ENCODE measurements at regions of chr1 and their contacts with region 1.

Region 1: GRCh38 chr1:248807067-248807737 is 18.5 kb downstream of the SH3BP5L start:
- DNase-seq: peak in 4 of 5 donors; percentile 35 to 48 (median 42)
- H3K4me3 ChIP-seq: no peak overlapping the region
- H3K4me3 Mint-ChIP-seq: no peak overlapping the region
- H3K27ac ChIP-seq: no peak overlapping the region
- H3K27ac Mint-ChIP-seq: peak overlapping the region in 2 of 7 donors; percentile 4 to 73
- H3K4me1 ChIP-seq: no peaks in the 10 kb centered on the region
- H3K4me1 Mint-ChIP-seq: peaks cover 0 to 6% (median 3%) of the 10 kb centered on the region in 4 donors
- H3K27me3 ChIP-seq: no peaks in the 10 kb centered on the region
- H3K27me3 Mint-ChIP-seq: peaks cover 7 to 8% of the 10 kb centered on the region in 2 donors

Region 2: GRCh38 chr1:247681288-247681897 is 1125.8 kb before region 1 on chr1:
- CTCF ChIA-PET with region 1: no interaction called
- POLR2A ChIA-PET with region 1: no interaction called
- intact Hi-C with region 1: loop called (anchors 5 kb)
- DNase-seq: peak in 3 of 5 donors; percentile 5 to 8 (median 5)
- H3K4me3 ChIP-seq: no peak overlapping the region
- H3K4me3 Mint-ChIP-seq: no peak overlapping the region
- H3K27ac ChIP-seq: no peak overlapping the region
- H3K27ac Mint-ChIP-seq: no peak overlapping the region
- H3K4me1 ChIP-seq: no peaks in the 10 kb centered on the region
- H3K4me1 Mint-ChIP-seq: no peaks in the 10 kb centered on the region
- H3K27me3 ChIP-seq: no peaks in the 10 kb centered on the region
- H3K27me3 Mint-ChIP-seq: peaks cover 2% of the 10 kb centered on the region in 2 donors

Region 3: DNA sequence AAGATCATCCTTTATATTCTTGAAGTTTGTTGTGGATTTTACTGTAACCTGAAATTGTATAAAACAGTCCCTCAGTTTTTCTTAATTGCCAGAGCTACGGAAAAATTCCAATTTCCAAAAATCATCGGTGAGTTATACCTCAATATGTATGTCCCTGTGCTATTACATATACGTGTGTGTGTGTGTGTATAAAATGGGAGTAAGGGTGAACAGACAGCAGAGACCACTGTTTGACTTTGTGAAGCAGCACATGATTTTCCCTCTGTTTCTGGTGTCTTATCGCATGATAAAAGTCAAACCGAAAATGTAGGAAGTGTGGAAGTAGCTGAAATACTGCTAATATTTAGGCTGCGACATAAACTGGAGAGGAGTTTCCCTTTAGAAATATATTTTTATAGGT is 403.2 kb before region 1 on chr1:
- CTCF ChIA-PET with region 1: interaction called, 4 read pairs
- POLR2A ChIA-PET with region 1: no interaction called
- intact Hi-C with region 1: loop called (anchors 1 kb)
- DNase-seq: peak in 3 of 5 donors; percentile 3 to 21 (median 9)
- H3K4me3 ChIP-seq: no peak overlapping the region
- H3K4me3 Mint-ChIP-seq: no peak overlapping the region
- H3K27ac ChIP-seq: no peak overlapping the region
- H3K27ac Mint-ChIP-seq: peak overlapping the region in 2 of 7 donors; percentile 0 to 1
- H3K4me1 ChIP-seq: no peaks in the 10 kb centered on the region
- H3K4me1 Mint-ChIP-seq: no peaks in the 10 kb centered on the region
- H3K27me3 ChIP-seq: no peaks in the 10 kb centered on the region
- H3K27me3 Mint-ChIP-seq: no peaks in the 10 kb centered on the region

Region 4: DNA sequence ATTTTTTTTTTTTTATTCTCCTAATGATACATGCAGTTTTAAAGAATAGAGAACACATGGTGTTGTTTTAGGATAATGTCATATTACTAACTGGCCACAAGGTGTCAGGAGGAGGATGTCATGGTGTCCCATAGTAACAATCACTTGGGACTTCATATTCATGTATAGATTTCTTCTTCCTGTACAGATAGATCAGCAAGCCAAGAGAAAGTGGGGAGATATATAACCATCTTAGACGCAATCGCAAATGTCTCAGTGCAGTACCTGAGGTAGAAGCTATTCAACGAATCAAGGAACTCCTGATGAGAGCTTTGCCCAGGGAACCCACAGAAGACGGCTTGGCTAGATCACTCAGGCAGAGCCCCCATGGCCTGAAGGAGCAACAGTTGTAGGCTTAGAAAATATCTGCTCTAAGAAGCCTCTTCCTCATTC is 184.6 kb before region 1 on chr1:
- CTCF ChIA-PET with region 1: interaction called, 12 read pairs
- POLR2A ChIA-PET with region 1: no interaction called
- intact Hi-C with region 1: loop called (anchors 1 kb)
- DNase-seq: peak in 4 of 5 donors; percentile 3 to 26 (median 16)
- H3K4me3 ChIP-seq: no peak overlapping the region
- H3K4me3 Mint-ChIP-seq: no peak overlapping the region
- H3K27ac ChIP-seq: no peak overlapping the region
- H3K27ac Mint-ChIP-seq: no peak overlapping the region
- H3K4me1 ChIP-seq: no peaks in the 10 kb centered on the region
- H3K4me1 Mint-ChIP-seq: peaks cover 0 to 7% (median 3%) of the 10 kb centered on the region in 4 donors
- H3K27me3 ChIP-seq: no peaks in the 10 kb centered on the region
- H3K27me3 Mint-ChIP-seq: no peaks in the 10 kb centered on the region